Activated CD4-positive, alpha-beta T cell treated with anti-CD3 and anti-CD28 coated beads for 36 hours (primary cell): ENCODE measurements at regions of chr1 and their contacts with region 1.

Region 1: DNA sequence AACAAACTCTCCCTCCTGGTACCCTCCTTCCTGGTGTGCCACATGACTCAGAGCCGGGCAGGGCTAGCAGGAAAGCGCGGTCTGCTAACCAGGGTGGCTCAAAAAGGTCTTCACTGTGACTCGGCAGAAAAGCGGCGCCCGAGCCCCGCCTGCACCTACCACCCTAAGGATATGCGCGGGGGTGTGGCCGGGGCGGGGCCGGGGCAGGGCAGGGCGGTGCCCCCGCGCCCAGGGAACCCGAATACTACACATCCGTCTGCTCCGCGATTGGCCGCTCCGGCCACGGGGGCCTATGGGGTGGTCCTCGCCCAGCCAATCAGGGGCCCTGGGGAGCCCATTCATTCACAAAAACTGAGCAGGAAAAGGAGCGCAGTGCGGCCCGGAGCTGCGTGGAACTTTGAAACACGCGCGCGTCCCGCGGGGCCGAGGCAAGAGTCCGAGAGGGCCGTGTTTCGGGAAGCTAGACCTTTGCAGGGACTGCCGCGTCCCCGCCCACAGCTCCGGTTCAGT is 1.7 kb downstream of the LRP8 start:
- DNase-seq: peak; percentile 98
- ATAC-seq: peak; percentile 89
- H3K4me3 Mint-ChIP-seq: peak overlapping the region; percentile 92
- H3K27ac Mint-ChIP-seq: peak overlapping the region; percentile 93
- H3K4me1 Mint-ChIP-seq: peaks cover 19% of the 10 kb centered on the region
- H3K27me3 Mint-ChIP-seq: no peaks in the 10 kb centered on the region

Region 2: GRCh38 chr1:51616901-51617708 is 1709.0 kb before region 1 on chr1 and contains the start of gene OSBPL9:
- CTCF ChIA-PET with region 1: no interaction called
- POLR2A ChIA-PET with region 1: no interaction called
- intact Hi-C with region 1: loop called in 1 of 2 experiments (anchors 5 kb)
- DNase-seq: peak; percentile 95
- ATAC-seq: peak; percentile 95
- H3K4me3 Mint-ChIP-seq: peak within 1 kb of the TSS; percentile 100
- H3K27ac Mint-ChIP-seq: peak within 1 kb of the TSS; percentile 96
- H3K4me1 Mint-ChIP-seq: peaks cover 33% of the 10 kb centered on the region
- H3K27me3 Mint-ChIP-seq: no peaks in the 10 kb centered on the region
- total RNA-seq, gene OSBPL9: 46.2 to 64.5 TPM

Region 3: DNA sequence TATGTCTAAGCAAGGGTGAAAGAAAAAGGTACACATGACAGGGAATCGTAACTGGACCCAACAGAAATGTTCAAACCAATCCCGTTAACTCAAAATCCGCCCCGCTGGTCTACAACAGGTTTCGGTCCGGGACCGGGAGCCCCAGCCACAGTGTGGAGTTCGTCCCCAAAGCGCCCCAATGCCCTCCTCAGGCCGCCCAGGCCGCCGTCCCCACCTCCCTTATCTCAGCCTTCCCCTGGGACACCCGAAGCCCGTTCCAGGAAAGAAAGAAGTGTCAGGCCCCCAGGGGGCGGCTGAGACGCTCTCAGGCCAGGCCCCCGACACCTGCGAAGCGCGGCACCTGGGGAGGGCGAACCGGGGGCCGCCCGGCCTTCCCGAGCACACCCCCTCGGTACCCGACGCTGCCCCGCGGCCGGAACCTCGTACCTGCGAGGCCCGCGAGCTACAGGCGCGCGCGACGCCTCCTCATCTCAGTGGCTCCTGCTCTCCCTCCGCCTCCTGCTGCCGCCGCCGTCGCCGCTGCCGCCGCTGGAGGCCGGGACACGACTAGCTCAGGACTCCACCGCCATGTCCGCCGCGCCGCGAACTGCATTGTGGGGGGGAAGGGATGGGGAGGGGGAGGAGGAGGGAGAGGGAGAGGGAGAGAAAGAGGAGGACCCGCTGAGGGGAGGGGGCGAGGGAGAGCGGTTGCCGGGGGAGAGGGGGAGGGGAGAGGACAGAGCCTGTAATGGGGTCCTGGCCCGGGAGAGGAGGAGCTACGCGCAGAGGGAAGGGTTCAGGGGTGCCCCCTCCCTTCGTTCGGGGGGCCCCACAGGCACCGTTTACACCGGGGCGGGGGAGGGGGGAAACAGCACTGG is 773.4 kb before region 1 on chr1 and contains the start of gene TUT4:
- CTCF ChIA-PET with region 1: no interaction called
- POLR2A ChIA-PET with region 1: no interaction called
- intact Hi-C with region 1: loop called in 1 of 2 experiments (anchors 10 kb)
- DNase-seq: peak; percentile 90
- ATAC-seq: peak; percentile 57
- H3K4me3 Mint-ChIP-seq: no peak within 1 kb of the TSS
- H3K27ac Mint-ChIP-seq: peak within 1 kb of the TSS; percentile 84
- H3K4me1 Mint-ChIP-seq: peaks cover 34% of the 10 kb centered on the region
- H3K27me3 Mint-ChIP-seq: no peaks in the 10 kb centered on the region
- total RNA-seq, gene TUT4: 61.6 to 71.7 TPM

Region 4: GRCh38 chr1:53220171-53220961 is 105.8 kb before region 1 on chr1 and contains the start of gene CZIB:
- CTCF ChIA-PET with region 1: no interaction called
- POLR2A ChIA-PET with region 1: no interaction called
- intact Hi-C with region 1: loop called (anchors 1 kb)
- DNase-seq: peak; percentile 98
- ATAC-seq: peak; percentile 95
- H3K4me3 Mint-ChIP-seq: peak within 1 kb of the TSS; percentile 87
- H3K27ac Mint-ChIP-seq: peak within 1 kb of the TSS; percentile 94
- H3K4me1 Mint-ChIP-seq: peaks cover 24% of the 10 kb centered on the region
- H3K27me3 Mint-ChIP-seq: no peaks in the 10 kb centered on the region
- total RNA-seq, gene CZIB: 45.4 to 48.7 TPM

Region 5: GRCh38 chr1:53266106-53266505 is 60.0 kb before region 1 on chr1:
- CTCF ChIA-PET with region 1: no interaction called
- POLR2A ChIA-PET with region 1: no interaction called
- intact Hi-C with region 1: no loop called
- DNase-seq: no peak
- ATAC-seq: no peak
- H3K4me3 Mint-ChIP-seq: no peak overlapping the region
- H3K27ac Mint-ChIP-seq: no peak overlapping the region
- H3K4me1 Mint-ChIP-seq: no peaks in the 10 kb centered on the region
- H3K27me3 Mint-ChIP-seq: no peaks in the 10 kb centered on the region

Region 6: GRCh38 chr1:53340660-53341520 is 14.7 kb after region 1 on chr1:
- CTCF ChIA-PET with region 1: no interaction called
- POLR2A ChIA-PET with region 1: no interaction called
- intact Hi-C with region 1: loop called in 1 of 2 experiments (anchors 1 kb)
- DNase-seq: peak; percentile 74
- ATAC-seq: peak; percentile 92
- H3K4me3 Mint-ChIP-seq: no peak overlapping the region
- H3K27ac Mint-ChIP-seq: peak overlapping the region; percentile 29
- H3K4me1 Mint-ChIP-seq: peaks cover 14% of the 10 kb centered on the region
- H3K27me3 Mint-ChIP-seq: no peaks in the 10 kb centered on the region

Region 7: GRCh38 chr1:53431805-53432565 is 105.8 kb after region 1 on chr1:
- CTCF ChIA-PET with region 1: no interaction called
- POLR2A ChIA-PET with region 1: no interaction called
- intact Hi-C with region 1: no loop called
- DNase-seq: no peak
- ATAC-seq: no peak
- H3K4me3 Mint-ChIP-seq: no peak overlapping the region
- H3K27ac Mint-ChIP-seq: no peak overlapping the region
- H3K4me1 Mint-ChIP-seq: peaks cover 10% of the 10 kb centered on the region
- H3K27me3 Mint-ChIP-seq: peaks cover 3% of the 10 kb centered on the region

Region 8: GRCh38 chr1:53889304-53890298 is 563.5 kb after region 1 on chr1 and contains the start of gene YIPF1:
- CTCF ChIA-PET with region 1: no interaction called
- POLR2A ChIA-PET with region 1: no interaction called
- intact Hi-C with region 1: loop called in 1 of 2 experiments (anchors 2 kb)
- DNase-seq: peak; percentile 93
- ATAC-seq: peak; percentile 90
- H3K4me3 Mint-ChIP-seq: peak within 1 kb of the TSS; percentile 96
- H3K27ac Mint-ChIP-seq: peak within 1 kb of the TSS; percentile 94
- H3K4me1 Mint-ChIP-seq: peaks cover 38% of the 10 kb centered on the region
- H3K27me3 Mint-ChIP-seq: no peaks in the 10 kb centered on the region
- total RNA-seq, gene YIPF1: 19.0 to 24.4 TPM

Region 9: DNA sequence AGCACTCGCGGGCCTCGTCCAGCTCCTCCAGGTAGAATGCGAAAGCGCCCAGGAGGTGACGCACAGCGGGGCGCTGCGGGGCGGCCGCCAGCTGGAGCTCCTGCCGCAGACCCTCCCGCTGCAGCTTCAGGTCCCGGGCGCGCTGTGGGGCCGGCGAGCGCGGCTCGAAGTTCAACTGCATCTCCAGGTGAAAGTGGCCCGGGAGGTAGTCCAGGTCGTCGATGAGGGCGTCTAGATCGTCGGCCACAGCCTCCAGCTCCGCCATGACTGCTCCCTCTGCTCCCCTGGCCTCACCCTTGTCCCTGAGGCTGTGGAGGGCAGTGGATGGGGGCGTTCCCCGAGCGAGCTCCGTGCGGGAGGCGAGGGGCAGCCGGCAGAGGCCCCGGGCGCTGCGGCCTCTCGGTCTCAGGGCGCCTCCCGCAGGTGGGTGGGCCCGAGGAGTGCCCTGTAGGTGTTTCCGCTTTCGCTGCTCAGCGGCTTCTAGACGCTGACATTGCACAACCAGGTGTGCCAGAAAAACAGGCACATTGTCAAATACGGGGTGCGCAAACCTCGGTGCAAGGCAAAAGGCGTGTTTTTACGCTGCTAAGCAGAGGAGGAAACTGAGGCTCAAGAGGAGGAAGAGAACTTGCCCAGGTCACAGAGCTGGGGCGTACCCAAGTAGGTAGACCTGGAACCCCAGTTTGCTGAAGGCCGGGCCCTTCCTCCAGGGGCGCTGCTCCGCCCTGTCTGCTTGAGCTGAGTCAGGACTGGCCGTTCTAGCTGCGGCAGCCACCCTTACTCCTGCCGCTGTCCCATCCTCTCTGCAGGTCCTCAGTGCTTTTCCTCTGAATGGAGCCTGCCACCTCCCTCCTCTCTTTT is 1475.0 kb after region 1 on chr1 and contains the start of gene TTC22:
- CTCF ChIA-PET with region 1: no interaction called
- POLR2A ChIA-PET with region 1: no interaction called
- intact Hi-C with region 1: loop called in 1 of 2 experiments (anchors 2 kb)
- DNase-seq: peak; percentile 87
- ATAC-seq: peak; percentile 60
- H3K4me3 Mint-ChIP-seq: peak within 1 kb of the TSS; percentile 77
- H3K27ac Mint-ChIP-seq: peak within 1 kb of the TSS; percentile 86
- H3K4me1 Mint-ChIP-seq: peaks cover 55% of the 10 kb centered on the region
- H3K27me3 Mint-ChIP-seq: no peaks in the 10 kb centered on the region
- total RNA-seq, gene TTC22: 4.1 to 4.2 TPM